HepG2 (cell line): ENCODE measurements at regions of chr2 and their contacts with region 1.

Region 1: GRCh38 chr2:215793747-215794595 is 219.4 kb downstream of the MREG start:
- DNase-seq: peak; percentile 100
- ATAC-seq: peak; percentile 86
- H3K4me3 ChIP-seq: peak overlapping the region in 1 of 3 experiments; percentile 1; a peak in 1 of 6 replicates
- H3K27ac ChIP-seq: peak overlapping the region; percentile 85
- H3K4me1 ChIP-seq: peaks cover 77% of the 10 kb centered on the region
- H3K27me3 ChIP-seq: no peaks in the 10 kb centered on the region
- CTCF ChIP-seq: no peak
- EP300 ChIP-seq: peak; percentile 64 to 99; a peak in 3 of 4 replicates
- POLR2A ChIP-seq: 0 out of 4 replicates have a peak, but pooled peaks of 1 of the 2 experiments have one; percentile 25
- RAD21 ChIP-seq: no peak

Region 2: DNA sequence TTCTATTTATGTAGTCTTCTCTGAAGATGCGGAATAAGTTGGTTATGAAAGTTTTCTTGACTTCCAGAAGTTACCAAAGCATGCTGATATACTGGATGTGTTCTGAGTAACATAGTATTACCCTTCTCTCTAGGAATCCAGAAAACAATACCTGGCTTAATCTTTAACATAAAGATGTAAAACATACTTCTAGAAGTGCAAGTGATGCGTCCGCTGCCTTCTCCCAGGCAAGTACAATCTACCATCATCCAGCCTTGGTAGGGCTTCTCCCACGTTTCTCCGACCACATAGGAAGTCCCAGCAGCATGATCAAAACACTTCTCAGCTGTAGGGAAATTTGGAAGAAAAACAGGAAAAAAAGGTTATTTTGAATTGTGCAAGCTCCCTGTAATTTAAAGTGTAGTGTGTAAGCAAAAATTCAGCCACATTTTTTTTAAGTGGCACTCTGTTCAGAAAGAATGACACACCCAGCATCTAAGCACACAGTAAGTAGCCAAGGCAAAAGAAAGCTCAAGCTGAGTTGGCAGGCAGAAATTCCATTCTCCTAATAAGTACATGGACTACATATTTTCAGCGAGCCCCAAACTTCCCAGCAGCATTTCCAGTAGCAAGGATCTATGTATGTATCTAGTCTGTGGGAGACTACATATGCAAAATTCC is 363.3 kb before region 1 on chr2:
- CTCF ChIA-PET with region 1: no interaction called
- POLR2A ChIA-PET with region 1: interaction called, 10 read pairs
- in situ Hi-C with region 1: no loop called
- intact Hi-C with region 1: loop called (anchors 5 kb)
- DNase-seq: no peak
- ATAC-seq: peak; percentile 3; the same call in 1 of the 3 replicates
- H3K4me3 ChIP-seq: peak overlapping the region; percentile 1 to 99 (median 64); a peak in 3 of 6 replicates
- H3K27ac ChIP-seq: peak overlapping the region; percentile 33
- H3K4me1 ChIP-seq: peaks cover 78% of the 10 kb centered on the region
- H3K27me3 ChIP-seq: no peaks in the 10 kb centered on the region; a peak in 1 of 5 replicates
- CTCF ChIP-seq: no peak
- EP300 ChIP-seq: no peak
- POLR2A ChIP-seq: peak in 1 of 2 experiments; percentile 9; a peak in 1 of 4 replicates
- RAD21 ChIP-seq: no peak

Region 3: DNA sequence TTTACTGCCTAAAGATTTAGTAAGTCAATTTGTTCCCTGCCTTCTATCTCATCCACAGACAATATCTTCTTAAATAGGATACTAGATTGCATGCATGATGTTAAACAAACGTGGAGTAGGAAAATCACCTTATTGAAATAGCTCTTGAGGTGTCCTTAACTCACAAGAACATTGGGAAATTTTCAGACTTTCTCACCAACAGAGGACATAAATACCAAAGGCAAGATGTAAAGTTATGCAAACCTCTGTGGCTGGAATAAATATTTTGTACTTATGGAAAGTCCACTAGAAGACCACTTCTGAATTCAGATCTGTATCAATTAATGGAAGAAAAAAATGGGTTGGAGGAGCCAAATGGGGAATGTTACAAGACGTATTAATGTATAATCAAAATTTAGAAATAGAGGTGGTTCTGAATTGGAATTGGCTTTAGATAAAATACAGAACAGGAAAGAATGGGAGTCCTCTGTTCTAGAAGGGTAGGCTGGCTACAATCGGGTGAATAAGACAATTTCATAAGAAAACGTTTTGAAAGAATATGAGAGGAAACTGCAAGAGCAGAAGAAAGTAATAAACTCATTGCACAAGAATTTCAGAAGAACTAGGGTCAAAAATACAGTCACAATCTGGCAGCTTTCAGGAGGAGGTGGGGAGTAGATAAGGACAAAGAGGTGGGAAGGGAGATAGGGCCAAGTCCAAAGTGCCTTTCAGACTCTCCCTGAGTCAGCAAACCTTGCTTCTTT is 288.8 kb before region 1 on chr2:
- CTCF ChIA-PET with region 1: no interaction called
- POLR2A ChIA-PET with region 1: interaction called, 4 read pairs
- in situ Hi-C with region 1: no loop called
- intact Hi-C with region 1: loop called (anchors 5 kb)
- DNase-seq: peak; percentile 90
- ATAC-seq: peak; percentile 91
- H3K4me3 ChIP-seq: no peak overlapping the region
- H3K27ac ChIP-seq: peak overlapping the region; percentile 67
- H3K4me1 ChIP-seq: peaks cover 46% of the 10 kb centered on the region
- H3K27me3 ChIP-seq: no peaks in the 10 kb centered on the region
- CTCF ChIP-seq: no peak
- EP300 ChIP-seq: peak; percentile 47 to 92; a peak in 3 of 4 replicates
- POLR2A ChIP-seq: no peak
- RAD21 ChIP-seq: no peak

Region 4: GRCh38 chr2:215693193-215693998 is 100.6 kb before region 1 on chr2:
- CTCF ChIA-PET with region 1: no interaction called
- POLR2A ChIA-PET with region 1: interaction called, 42 read pairs
- in situ Hi-C with region 1: no loop called
- intact Hi-C with region 1: loop called (anchors 1 kb)
- DNase-seq: peak; percentile 93
- ATAC-seq: peak; percentile 92
- H3K4me3 ChIP-seq: peak overlapping the region in 1 of 3 experiments; percentile 13; a peak in 1 of 6 replicates
- H3K27ac ChIP-seq: peak overlapping the region; percentile 80
- H3K4me1 ChIP-seq: peaks cover 47% of the 10 kb centered on the region
- H3K27me3 ChIP-seq: no peaks in the 10 kb centered on the region
- CTCF ChIP-seq: no peak
- EP300 ChIP-seq: peak in 1 of 2 experiments; percentile 96; a peak in 2 of 4 replicates
- POLR2A ChIP-seq: peak in 1 of 2 experiments; percentile 47; a peak in 1 of 4 replicates
- RAD21 ChIP-seq: no peak

Region 5: DNA sequence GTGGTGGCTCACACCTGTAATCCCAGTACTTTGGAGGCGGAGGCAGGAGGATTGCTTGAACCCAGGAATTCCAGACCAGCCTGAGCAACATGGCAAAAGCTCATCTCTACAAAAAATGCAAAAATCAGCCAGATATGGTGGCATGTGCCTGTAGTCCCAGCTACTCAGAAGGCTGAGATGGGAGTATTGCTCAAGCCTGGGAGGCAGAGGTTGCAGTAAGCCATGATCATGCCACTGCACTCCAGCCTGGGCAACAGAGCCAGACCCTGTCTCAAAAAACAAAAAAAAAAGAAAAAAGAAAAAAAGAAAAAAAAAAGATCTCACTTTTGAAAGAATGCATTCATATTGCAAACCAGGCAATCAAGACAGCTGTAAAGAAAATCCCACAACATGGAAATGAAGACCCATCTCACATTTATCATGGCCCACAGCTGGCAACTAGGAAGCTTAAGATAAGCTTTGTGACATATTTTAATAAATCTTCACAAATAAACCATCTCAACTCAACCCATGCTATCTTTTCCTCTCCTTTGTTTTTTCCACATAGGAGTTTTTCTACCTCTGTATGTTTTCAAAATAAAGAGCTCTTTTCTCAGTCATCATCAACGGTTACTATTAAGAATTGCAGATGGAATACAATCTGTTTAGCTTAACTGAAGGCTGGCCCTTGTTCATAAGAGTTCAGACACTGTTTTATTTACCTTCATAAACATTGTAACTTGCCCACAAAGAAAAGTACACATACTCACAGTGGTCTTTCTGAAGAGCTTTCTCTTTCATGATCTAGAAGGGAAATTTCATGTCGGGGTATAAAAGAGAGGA is 82.4 kb after region 1 on chr2:
- CTCF ChIA-PET with region 1: no interaction called
- POLR2A ChIA-PET with region 1: interaction called, 16 read pairs
- in situ Hi-C with region 1: no loop called
- intact Hi-C with region 1: no loop called
- DNase-seq: peak; percentile 90
- ATAC-seq: peak; percentile 93
- H3K4me3 ChIP-seq: no peak overlapping the region
- H3K27ac ChIP-seq: peak overlapping the region; percentile 53
- H3K4me1 ChIP-seq: peaks cover 57% of the 10 kb centered on the region
- H3K27me3 ChIP-seq: no peaks in the 10 kb centered on the region
- CTCF ChIP-seq: no peak
- EP300 ChIP-seq: peak in 1 of 2 experiments; percentile 94; a peak in 2 of 4 replicates
- POLR2A ChIP-seq: no peak
- RAD21 ChIP-seq: no peak